Heart right ventricle (tissue), 16 donors: ENCODE measurements at regions of chr7 and their contacts with region 1.

Region 1: DNA sequence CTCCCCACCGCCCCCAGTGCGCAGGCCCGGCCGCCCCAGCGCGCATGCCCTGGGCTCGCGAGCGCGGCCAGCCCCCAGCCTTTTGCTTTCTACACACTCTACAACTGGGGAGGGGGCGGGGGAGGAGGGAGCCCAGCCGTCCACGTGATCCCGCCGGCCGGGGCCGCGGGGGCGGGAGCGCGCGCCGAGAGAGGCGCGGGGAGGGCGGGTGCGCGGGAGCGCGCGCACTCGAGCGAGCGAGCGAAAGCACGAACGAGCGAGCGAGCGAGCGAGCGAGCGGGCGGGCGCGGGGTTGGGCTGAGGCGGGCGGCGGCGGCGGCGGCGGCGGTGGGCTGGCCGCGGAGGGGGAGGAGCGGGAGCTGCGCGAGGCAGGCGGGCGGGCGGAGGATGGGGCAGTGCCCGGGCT is at the start of gene AUTS2:
- DNase-seq: peak; percentile 88 to 90
- ATAC-seq: peak; percentile 82 to 93 (median 90)
- H3K4me3 ChIP-seq: peak within 1 kb of the TSS; percentile 76 to 98 (median 83)
- H3K27ac ChIP-seq: peak within 1 kb of the TSS; percentile 68 to 92 (median 88)
- H3K4me1 ChIP-seq: peaks cover 0 to 24% (median 11%) of the 10 kb centered on the region in 9 donors
- H3K27me3 ChIP-seq: peaks cover 0 to 21% (median 0%) of the 10 kb centered on the region in 7 donors
- CTCF ChIP-seq: no peak
- total RNA-seq, gene AUTS2: 5.0 to 11.2 (median 7.9) TPM

Region 2: GRCh38 chr7:69457595-69458504 is 140.2 kb before region 1 on chr7:
- intact Hi-C with region 1: loop called in 1 of 10 experiments (anchors 10 kb)
- DNase-seq: peak; percentile 68 to 89
- ATAC-seq: peak; percentile 92 to 97 (median 95)
- H3K4me3 ChIP-seq: no peak overlapping the region
- H3K27ac ChIP-seq: peak overlapping the region in 8 of 10 donors; percentile 25 to 74 (median 44)
- H3K4me1 ChIP-seq: peaks cover 2 to 18% (median 16%) of the 10 kb centered on the region in 9 donors
- H3K27me3 ChIP-seq: no peaks in the 10 kb centered on the region
- CTCF ChIP-seq: no peak

Region 3: DNA sequence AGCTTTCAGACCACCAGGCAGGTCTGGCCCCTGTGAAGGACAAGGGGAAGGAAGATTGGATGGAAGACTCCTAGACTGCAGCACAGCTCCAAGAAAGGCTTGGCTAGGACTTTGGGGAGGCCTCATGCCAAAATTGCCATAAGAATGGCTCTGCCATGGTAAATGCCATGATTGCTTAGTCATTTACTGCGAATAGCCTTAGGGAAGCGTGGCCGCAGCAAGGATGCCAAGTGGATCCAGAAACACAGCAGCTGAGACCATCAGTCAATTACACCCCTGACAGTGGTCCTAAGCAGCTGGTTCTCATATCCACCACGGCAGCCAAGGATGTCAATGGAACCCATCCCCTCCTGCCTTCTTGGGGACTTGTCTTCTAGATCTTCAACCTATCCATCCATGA is 88.0 kb before region 1 on chr7:
- intact Hi-C with region 1: no loop called
- DNase-seq: no peak
- ATAC-seq: no peak
- H3K4me3 ChIP-seq: no peak overlapping the region
- H3K27ac ChIP-seq: no peak overlapping the region
- H3K4me1 ChIP-seq: no peaks in the 10 kb centered on the region
- H3K27me3 ChIP-seq: no peaks in the 10 kb centered on the region
- CTCF ChIP-seq: no peak

Region 4: GRCh38 chr7:69534461-69535041 is 63.5 kb before region 1 on chr7:
- intact Hi-C with region 1: no loop called
- DNase-seq: no peak
- ATAC-seq: no peak
- H3K4me3 ChIP-seq: no peak overlapping the region
- H3K27ac ChIP-seq: no peak overlapping the region
- H3K4me1 ChIP-seq: no peaks in the 10 kb centered on the region
- H3K27me3 ChIP-seq: peaks cover 0 to 41% (median 8%) of the 10 kb centered on the region in 7 donors
- CTCF ChIP-seq: no peak

Region 5: DNA sequence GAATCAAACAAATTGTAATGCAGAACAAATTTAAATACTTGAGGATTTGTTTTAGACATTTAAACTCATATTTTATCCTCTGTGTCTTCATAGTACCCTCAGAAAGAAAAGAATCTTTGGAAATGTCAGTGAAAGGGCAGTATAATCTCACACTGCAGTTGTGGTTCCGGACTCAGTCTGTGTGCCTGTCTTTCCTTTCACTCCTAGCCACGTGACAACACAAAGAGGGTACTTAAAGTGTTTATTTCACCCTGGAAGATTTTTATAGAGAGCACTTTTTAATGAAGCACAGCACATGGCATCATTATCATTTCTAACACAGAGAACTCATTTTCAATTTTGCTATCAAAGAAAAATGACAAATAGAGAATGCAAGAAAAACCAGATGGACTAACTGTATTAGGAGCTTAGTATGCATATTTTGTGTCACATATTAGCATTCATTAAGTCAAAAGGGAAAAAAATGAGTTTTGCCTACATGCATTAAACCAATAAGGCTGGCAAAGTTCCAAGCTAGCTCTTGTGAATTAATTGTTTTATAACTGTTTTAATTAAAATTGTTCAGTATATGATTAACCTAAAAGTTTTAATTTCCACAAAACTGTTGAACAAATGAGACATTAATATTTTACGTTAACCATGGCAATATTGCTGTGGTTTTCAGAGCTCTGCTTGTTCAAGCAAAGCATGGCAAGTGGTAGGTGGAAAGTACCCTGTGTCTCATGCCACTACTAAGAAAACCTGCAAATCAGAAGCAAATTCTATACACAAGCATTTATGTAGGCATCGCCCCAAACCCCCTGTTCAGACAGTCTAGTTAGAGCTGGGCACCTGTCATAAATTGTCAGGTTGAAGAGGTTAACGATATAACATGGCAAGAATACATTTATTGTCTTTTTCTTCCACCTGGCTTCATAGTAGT is 66.1 kb after region 1 on chr7:
- intact Hi-C with region 1: loop called in 1 of 10 experiments (anchors 10 kb)
- DNase-seq: no peak
- ATAC-seq: no peak
- H3K4me3 ChIP-seq: no peak overlapping the region
- H3K27ac ChIP-seq: no peak overlapping the region
- H3K4me1 ChIP-seq: peaks cover 0 to 5% (median 0%) of the 10 kb centered on the region in 9 donors
- H3K27me3 ChIP-seq: no peaks in the 10 kb centered on the region
- CTCF ChIP-seq: no peak

Region 6: GRCh38 chr7:69677054-69677852 is 79.2 kb after region 1 on chr7:
- intact Hi-C with region 1: loop called in 1 of 10 experiments (anchors 5 kb)
- DNase-seq: no peak
- ATAC-seq: no peak
- H3K4me3 ChIP-seq: no peak overlapping the region
- H3K27ac ChIP-seq: peak overlapping the region in 3 of 10 donors; percentile 1 to 30 (median 18)
- H3K4me1 ChIP-seq: peaks cover 0 to 40% (median 15%) of the 10 kb centered on the region in 9 donors
- H3K27me3 ChIP-seq: no peaks in the 10 kb centered on the region
- CTCF ChIP-seq: peak in 6 of 9 donors; percentile 24 to 50 (median 32)

Region 7: GRCh38 chr7:69893906-69894305 is 295.8 kb after region 1 on chr7:
- intact Hi-C with region 1: loop called in 1 of 10 experiments (anchors 10 kb)
- DNase-seq: no peak
- ATAC-seq: peak in 2 of 8 donors; percentile 44 to 46
- H3K4me3 ChIP-seq: no peak overlapping the region
- H3K27ac ChIP-seq: no peak overlapping the region
- H3K4me1 ChIP-seq: peaks cover 0 to 5% (median 0%) of the 10 kb centered on the region in 9 donors
- H3K27me3 ChIP-seq: no peaks in the 10 kb centered on the region
- CTCF ChIP-seq: peak in 8 of 9 donors; percentile 16 to 59 (median 44)